Posterior cingulate gyrus (tissue), 11 donors: ENCODE measurements at regions of chr5 and their contacts with region 1.

Region 1: DNA sequence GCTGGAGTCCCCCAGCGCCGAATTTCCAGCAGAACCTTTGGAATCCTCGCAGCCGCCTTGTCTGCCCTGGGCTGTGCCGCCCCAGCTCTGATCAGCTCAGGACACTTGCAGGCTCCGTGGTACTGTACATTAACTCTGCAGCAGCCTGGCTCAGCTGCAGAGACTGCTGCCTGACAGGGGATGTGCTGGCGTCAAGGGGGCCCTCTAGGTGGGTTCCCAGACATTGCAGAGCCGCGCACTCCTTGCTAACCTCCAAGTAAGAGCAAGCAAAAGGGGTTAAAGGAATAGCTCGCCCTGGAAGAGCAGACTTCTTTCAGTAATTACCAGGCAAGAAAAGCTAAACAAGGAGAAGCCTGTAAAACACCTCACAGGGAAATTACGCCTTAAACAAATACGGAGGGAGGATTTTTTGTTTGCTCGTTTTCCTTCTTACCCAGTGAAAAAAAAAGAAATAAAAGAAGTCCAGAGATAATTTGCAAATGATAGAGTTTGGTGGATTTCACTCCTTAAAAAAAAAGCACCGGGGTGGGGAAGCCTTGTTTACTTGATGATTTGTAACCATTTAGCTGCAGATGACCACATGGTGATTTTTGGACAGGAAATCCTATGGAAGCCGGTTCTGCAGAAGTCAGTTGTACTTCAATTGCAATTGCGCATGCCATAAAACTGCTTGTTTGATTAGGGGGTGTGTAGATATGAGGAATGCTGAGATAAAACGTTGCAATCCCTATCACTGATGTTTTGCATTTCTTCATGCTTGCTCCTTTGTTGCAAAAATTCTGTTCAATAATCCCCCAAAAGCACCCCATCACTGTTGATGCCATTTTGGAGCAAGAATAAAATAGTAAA is 305.8 kb downstream of the PDE4D start:
- DNase-seq: peak; percentile 76 to 98 (median 89)

Region 2: DNA sequence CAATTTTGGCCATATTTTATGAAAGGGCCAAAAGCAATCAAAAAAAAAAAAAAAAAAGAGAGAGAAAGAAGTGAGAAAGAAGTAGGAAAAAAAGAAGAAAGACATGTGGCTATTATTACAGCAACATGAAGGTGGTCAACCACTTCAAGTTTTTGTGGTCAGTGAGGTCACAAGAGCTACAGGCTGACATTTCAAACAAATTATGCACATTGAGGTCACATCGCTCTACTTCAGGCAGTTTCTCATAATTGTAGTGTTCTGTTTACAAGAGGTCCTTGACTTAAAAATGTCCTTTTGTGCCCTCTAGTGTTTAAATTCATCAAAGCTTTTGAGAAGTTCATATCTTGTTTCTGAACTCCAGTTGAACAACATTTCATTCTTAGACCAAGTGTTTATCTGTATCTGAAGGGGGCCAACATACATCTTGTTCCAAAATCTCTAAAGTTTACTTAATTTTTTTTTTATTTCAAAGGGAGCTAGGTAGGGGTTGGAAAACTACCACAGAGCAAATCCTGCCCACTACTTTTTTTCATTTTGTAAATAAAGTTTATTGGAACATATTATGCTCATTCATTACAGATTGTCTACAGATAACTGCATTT is 207.3 kb before region 1 on chr5:
- intact Hi-C with region 1: loop called (anchors 10 kb)
- DNase-seq: no peak

Region 3: GRCh38 chr5:59548807-59549357 is 38.8 kb before region 1 on chr5:
- intact Hi-C with region 1: loop called (anchors 5 kb)
- DNase-seq: no peak

Region 4: GRCh38 chr5:59620535-59621212 is 33.0 kb after region 1 on chr5:
- intact Hi-C with region 1: no loop called
- DNase-seq: no peak